ENCODE measurements at regions of chr12 and their contacts with region 1.

Region 1: GRCh38 chr12:49121047-49121696 is 10.0 kb downstream of the TUBA1B start:
- DNase-seq: peak; percentile 13 to 56
- H3K4me3 ChIP-seq: no peak overlapping the region
- H3K27ac ChIP-seq: no peak overlapping the region
- H3K4me1 ChIP-seq: no peaks in the 10 kb centered on the region
- H3K27me3 ChIP-seq: no peaks in the 10 kb centered on the region
- CTCF ChIP-seq: peak; percentile 48 to 82 (median 80)
- EP300 ChIP-seq: no peak
- POLR2A ChIP-seq: no peak
- RAD21 ChIP-seq: peak; percentile 75 to 80

Region 2: GRCh38 chr12:49105608-49106007 is 15.6 kb before region 1 on chr12:
- CTCF ChIA-PET with region 1: interaction called, 35 read pairs
- POLR2A ChIA-PET with region 1: interaction called, 7 read pairs
- DNase-seq: no peak
- H3K4me3 ChIP-seq: no peak overlapping the region
- H3K27ac ChIP-seq: no peak overlapping the region
- H3K4me1 ChIP-seq: peaks cover 0 to 7% (median 2%) of the 10 kb centered on the region in 4 experiments; a peak in 4 of 7 replicates
- H3K27me3 ChIP-seq: no peaks in the 10 kb centered on the region
- CTCF ChIP-seq: no peak
- EP300 ChIP-seq: no peak
- POLR2A ChIP-seq: no peak
- RAD21 ChIP-seq: no peak

Region 3: GRCh38 chr12:49110464-49111155 is 10.6 kb before region 1 on chr12 and contains the start of gene LMBR1L:
- CTCF ChIA-PET with region 1: interaction called, 29 read pairs
- POLR2A ChIA-PET with region 1: interaction called, 7 read pairs
- DNase-seq: peak; percentile 90 to 93
- H3K4me3 ChIP-seq: peak within 1 kb of the TSS; percentile 74 to 99 (median 92)
- H3K27ac ChIP-seq: peak within 1 kb of the TSS; percentile 55; the same call in 1 of the 2 replicates
- H3K4me1 ChIP-seq: peaks cover 0 to 10% (median 2%) of the 10 kb centered on the region in 4 experiments; a peak in 3 of 7 replicates
- H3K27me3 ChIP-seq: no peaks in the 10 kb centered on the region
- CTCF ChIP-seq: peak; percentile 9 to 43 (median 40); a peak in 2 of 4 replicates
- EP300 ChIP-seq: no peak
- POLR2A ChIP-seq: peak in 1 of 2 experiments; percentile 60; a peak in 1 of 3 replicates
- RAD21 ChIP-seq: peak in 1 of 2 experiments; percentile 5; a peak in 1 of 4 replicates
- total RNA-seq, gene LMBR1L: 47.7 and 49.6 TPM in 2 replicates

Measured in H1 (cell line).